Spleen (tissue), 13 donors: ENCODE measurements at regions of chr7 and their contacts with region 1.

Region 1: GRCh38 chr7:25735674-25736242 is 416.2 kb upstream of the NFE2L3 start:
- DNase-seq: no peak
- H3K4me3 ChIP-seq: no peak overlapping the region
- H3K27ac ChIP-seq: no peak overlapping the region
- H3K4me1 ChIP-seq: peaks cover 0 to 4% (median 0%) of the 10 kb centered on the region in 6 donors
- H3K27me3 ChIP-seq: peaks cover 0 to 20% (median 4%) of the 10 kb centered on the region in 7 donors
- CTCF ChIP-seq: no peak
- POLR2A ChIP-seq: no peak

Region 2: GRCh38 chr7:25454562-25455041 is 281.2 kb before region 1 on chr7:
- intact Hi-C with region 1: no loop called
- DNase-seq: no peak
- H3K4me3 ChIP-seq: no peak overlapping the region
- H3K27ac ChIP-seq: peak overlapping the region in 5 of 8 donors; percentile 44 to 62 (median 59)
- H3K4me1 ChIP-seq: peaks cover 0 to 21% (median 3%) of the 10 kb centered on the region in 6 donors
- H3K27me3 ChIP-seq: no peaks in the 10 kb centered on the region
- CTCF ChIP-seq: no peak
- POLR2A ChIP-seq: no peak

Region 3: GRCh38 chr7:25597946-25598345 is 137.8 kb before region 1 on chr7:
- intact Hi-C with region 1: loop called (anchors 5 kb)
- DNase-seq: no peak
- H3K4me3 ChIP-seq: no peak overlapping the region
- H3K27ac ChIP-seq: peak overlapping the region in 4 of 8 donors; percentile 20 to 43 (median 34)
- H3K4me1 ChIP-seq: peaks cover 0 to 14% (median 2%) of the 10 kb centered on the region in 6 donors
- H3K27me3 ChIP-seq: peaks cover 0 to 7% (median 0%) of the 10 kb centered on the region in 7 donors
- CTCF ChIP-seq: no peak
- POLR2A ChIP-seq: no peak

Region 4: DNA sequence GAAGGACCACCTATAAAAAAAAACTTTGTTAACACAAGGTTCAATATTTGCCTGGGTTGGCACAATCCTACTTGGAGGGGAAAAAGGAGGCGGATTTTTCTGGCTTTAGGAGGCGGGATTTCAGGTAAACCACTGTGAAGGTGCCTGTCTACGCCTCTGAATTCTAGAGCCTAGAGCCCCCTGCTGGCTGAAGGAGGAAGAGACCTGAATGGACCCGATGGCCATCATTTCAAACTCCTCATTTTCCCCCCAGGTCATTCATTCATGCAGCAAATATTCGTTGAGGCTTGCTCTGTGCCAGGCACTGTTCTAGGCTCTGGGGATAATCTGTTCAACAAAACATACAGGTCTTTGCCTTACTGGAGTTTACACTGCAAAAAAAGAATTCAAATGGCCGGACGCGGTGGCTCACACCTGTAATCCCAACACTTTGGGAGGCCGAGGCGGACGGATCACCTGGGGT is 326.0 kb after region 1 on chr7:
- intact Hi-C with region 1: no loop called
- DNase-seq: no peak
- H3K4me3 ChIP-seq: no peak overlapping the region
- H3K27ac ChIP-seq: no peak overlapping the region
- H3K4me1 ChIP-seq: peaks cover 0 to 8% (median 2%) of the 10 kb centered on the region in 6 donors
- H3K27me3 ChIP-seq: peaks cover 0 to 69% (median 0%) of the 10 kb centered on the region in 7 donors
- CTCF ChIP-seq: peak; percentile 26 to 89 (median 76)
- POLR2A ChIP-seq: no peak